PC-3 (cell line): ENCODE measurements at regions of chr4 and their contacts with region 1.

Region 1: DNA sequence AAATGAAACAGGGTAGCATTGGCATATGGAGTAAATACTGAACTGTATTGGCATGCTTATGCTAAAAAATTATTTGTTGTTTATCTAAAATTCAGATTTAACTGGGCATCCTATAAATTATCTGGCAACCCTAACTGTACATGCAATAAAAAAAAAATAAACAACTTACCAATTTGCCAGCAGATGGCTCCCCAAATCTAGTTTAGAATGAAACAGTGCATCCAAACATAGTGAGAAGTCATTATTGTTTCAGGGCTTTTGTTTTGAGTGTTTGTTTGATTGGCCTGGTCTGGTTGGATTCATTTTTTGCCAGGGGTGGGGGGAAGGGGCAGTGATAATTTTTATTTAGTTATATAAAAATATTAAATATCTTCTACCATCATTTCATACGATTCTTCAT is 12.8 kb upstream of the NSUN7 start:
- DNase-seq: peak; percentile 42
- ATAC-seq: no peak
- H3K4me3 ChIP-seq: no peak overlapping the region
- H3K27ac ChIP-seq: no peak overlapping the region
- H3K4me1 ChIP-seq: no peaks in the 10 kb centered on the region
- H3K27me3 ChIP-seq: no peaks in the 10 kb centered on the region
- CTCF ChIP-seq: peak; percentile 52

Region 2: GRCh38 chr4:40149960-40150385 is 586.9 kb before region 1 on chr4:
- CTCF ChIA-PET with region 1: no interaction called
- POLR2A ChIA-PET with region 1: no interaction called
- intact Hi-C with region 1: loop called (anchors 10 kb)
- DNase-seq: peak; percentile 86
- ATAC-seq: peak; percentile 65
- H3K4me3 ChIP-seq: no peak overlapping the region
- H3K27ac ChIP-seq: peak overlapping the region; percentile 14
- H3K4me1 ChIP-seq: no peaks in the 10 kb centered on the region
- H3K27me3 ChIP-seq: no peaks in the 10 kb centered on the region
- CTCF ChIP-seq: peak; percentile 74

Region 3: DNA sequence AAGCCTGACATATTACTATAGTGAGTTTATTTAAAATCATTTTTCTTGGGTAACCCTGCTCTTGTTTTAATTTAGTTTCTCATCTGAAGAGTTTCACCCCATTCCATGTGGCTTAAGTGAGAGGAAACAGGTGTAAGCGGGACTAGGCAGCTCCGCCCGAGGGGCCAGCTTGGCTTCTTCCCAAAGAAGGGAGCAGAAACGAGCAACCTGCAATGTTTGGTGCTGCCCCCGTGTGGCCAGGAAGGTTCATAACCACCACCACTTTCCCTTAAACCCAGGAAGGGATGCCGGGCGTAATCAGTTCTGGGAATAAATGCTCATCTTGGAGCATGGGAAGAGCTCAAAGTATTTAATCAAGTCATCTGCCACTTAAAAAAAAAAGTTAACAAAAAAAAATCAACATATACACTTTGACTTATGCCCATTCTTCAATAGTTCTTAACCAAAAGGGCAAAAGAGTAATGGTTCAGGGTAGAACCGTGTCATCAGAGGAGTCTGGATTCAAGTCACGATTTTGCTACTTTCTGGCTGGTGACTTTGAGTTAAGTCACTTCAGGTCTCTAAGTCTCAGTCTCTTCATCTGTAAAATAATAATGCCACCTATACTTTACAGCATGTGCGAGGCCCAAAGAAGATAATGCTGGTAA is 160.8 kb after region 1 on chr4:
- CTCF ChIA-PET with region 1: interaction called, 9 read pairs
- POLR2A ChIA-PET with region 1: no interaction called
- intact Hi-C with region 1: loop called (anchors 1 kb)
- DNase-seq: peak; percentile 75
- ATAC-seq: peak; percentile 38; the same call in 1 of the 2 replicates
- H3K4me3 ChIP-seq: peak overlapping the region; percentile 42; the same call in 1 of the 2 replicates
- H3K27ac ChIP-seq: no peak overlapping the region
- H3K4me1 ChIP-seq: no peaks in the 10 kb centered on the region
- H3K27me3 ChIP-seq: no peaks in the 10 kb centered on the region
- CTCF ChIP-seq: peak; percentile 75

Region 4: DNA sequence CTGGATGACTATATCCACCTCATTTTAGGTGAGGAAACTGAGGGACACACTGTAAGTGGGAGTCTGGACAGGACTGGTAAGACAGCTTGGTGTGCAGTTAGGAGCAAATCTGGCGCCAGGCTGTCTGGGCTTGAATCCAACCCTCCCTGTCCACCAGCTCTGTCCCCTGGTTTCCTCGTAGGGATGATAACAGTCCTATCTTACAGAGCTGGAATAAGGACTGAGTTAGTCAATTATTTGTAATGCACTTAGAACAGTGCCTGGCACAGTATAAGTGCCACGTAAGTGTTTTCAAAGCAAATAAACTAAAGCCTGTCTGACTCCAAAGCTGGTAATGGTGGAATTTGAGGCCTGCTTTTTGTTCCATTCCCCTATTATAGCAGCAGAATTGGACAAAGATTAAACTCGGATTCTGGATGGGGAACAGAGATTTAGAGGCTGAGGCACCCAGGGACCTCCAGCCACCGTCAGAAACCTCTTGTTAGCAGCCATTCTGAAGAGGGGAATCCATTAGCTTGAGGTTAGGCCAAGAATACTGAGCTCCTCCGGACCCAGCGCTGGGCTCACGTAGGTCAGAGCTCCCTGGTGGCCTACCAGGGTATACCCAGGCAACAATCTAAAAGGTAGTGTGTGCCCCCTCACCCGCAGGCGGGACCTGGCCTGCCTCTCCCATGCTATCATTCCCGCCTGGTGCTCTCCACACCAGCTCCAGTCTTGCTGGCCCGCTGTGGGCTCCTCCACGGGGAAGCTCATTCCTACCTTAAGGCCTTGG is 621.9 kb after region 1 on chr4:
- CTCF ChIA-PET with region 1: no interaction called
- POLR2A ChIA-PET with region 1: interaction called, 14 read pairs
- intact Hi-C with region 1: no loop called
- DNase-seq: no peak
- ATAC-seq: no peak
- H3K4me3 ChIP-seq: no peak overlapping the region
- H3K27ac ChIP-seq: no peak overlapping the region
- H3K4me1 ChIP-seq: peaks cover 22% of the 10 kb centered on the region
- H3K27me3 ChIP-seq: no peaks in the 10 kb centered on the region
- CTCF ChIP-seq: 0 out of 2 replicates have a peak, but pooled peaks have one; percentile 18